MCF 10A (cell line): ENCODE measurements at regions of chr11 and their contacts with region 1.

Region 1: DNA sequence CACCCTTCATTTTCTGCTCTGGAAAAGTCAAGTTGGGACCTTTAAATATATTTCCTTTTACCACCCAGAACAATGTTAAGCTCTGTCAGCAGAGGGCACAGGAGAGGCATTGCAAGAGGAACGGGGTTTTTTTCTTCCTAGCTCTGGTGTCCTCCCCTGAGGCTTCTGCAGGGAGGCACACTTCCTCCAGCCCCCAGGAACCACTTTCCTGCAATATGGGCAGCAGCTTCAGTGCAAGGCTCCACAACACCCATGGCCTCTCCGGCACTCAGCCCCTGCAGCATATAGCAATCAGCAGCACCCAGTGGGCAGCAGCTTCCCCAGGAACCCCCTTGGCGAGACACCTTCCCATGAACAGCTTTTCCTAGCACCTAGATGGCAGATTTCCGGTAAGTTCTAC is 101.4 kb downstream of the SYT9 start:
- DNase-seq: peak; percentile 50
- H3K4me3 Mint-ChIP-seq: no peak overlapping the region
- H3K27ac Mint-ChIP-seq: no peak overlapping the region
- H3K4me1 Mint-ChIP-seq: peaks cover 9% of the 10 kb centered on the region
- H3K27me3 Mint-ChIP-seq: peaks cover 5% of the 10 kb centered on the region
- CTCF ChIP-seq: peak; percentile 42

Region 2: DNA sequence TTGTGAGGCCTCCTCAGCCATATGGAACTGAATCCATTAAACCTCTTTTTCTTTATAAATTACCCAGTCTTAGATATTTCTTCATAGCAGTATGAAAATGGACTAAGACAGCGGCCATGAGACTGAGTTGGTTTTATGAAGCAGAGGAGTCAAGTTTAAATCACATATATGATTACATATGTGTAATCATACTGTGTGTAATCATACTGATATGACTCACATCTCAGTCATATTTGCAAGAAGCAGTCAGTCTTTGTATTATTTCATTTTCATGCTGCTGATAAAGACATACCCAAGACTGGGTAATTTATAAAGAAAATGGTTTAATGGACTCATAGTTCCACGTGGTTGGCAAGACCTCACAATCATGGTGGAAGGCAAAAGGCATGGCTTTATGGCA is 11.5 kb before region 1 on chr11:
- CTCF ChIA-PET with region 1: interaction called, 10 read pairs
- POLR2A ChIA-PET with region 1: no interaction called
- intact Hi-C with region 1: no loop called
- DNase-seq: no peak
- H3K4me3 Mint-ChIP-seq: no peak overlapping the region
- H3K27ac Mint-ChIP-seq: no peak overlapping the region
- H3K4me1 Mint-ChIP-seq: no peaks in the 10 kb centered on the region
- H3K27me3 Mint-ChIP-seq: peaks cover 60% of the 10 kb centered on the region
- CTCF ChIP-seq: no peak